OCI-LY7 (cell line): ENCODE measurements at regions of chr1 and their contacts with region 1.

Region 1: DNA sequence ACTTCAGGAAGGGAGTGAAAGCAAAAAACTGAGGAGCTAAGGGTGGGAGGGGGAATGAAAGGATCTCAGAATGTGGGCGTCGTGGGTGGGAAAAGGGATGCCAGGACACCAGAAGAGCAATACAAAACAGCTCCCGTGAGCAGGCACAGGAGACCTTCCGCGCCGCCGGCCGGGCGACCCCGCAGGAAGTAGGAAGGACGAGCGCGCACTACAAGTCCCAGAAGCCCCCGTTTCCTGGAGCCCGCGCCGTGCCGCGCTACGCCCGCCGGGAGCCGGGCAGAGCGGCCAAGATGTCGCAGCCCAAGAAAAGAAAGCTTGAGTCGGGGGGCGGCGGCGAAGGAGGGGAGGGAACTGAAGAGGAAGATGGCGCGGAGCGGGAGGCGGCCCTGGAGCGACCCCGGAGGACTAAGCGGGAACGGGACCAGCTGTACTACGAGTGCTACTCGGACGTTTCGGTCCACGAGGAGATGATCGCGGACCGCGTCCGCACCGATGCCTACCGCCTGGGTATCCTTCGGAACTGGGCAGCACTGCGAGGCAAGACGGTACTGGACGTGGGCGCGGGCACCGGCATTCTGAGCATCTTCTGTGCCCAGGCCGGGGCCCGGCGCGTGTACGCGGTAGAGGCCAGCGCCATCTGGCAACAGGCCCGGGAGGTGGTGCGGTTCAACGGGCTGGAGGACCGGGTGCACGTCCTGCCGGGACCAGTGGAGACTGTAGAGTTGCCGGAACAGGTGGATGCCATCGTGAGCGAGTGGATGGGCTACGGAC is at the start of gene PRMT6:
- DNase-seq: peak; percentile 89
- H3K4me3 ChIP-seq: peak within 1 kb of the TSS; percentile 83
- H3K27ac ChIP-seq: peak within 1 kb of the TSS; percentile 54
- H3K4me1 ChIP-seq: peaks cover 21% of the 10 kb centered on the region
- CTCF ChIP-seq: peak; percentile 37; the same call in 1 of the 2 replicates
- total RNA-seq, gene PRMT6: 41.7 and 42.5 TPM in 2 replicates

Region 2: DNA sequence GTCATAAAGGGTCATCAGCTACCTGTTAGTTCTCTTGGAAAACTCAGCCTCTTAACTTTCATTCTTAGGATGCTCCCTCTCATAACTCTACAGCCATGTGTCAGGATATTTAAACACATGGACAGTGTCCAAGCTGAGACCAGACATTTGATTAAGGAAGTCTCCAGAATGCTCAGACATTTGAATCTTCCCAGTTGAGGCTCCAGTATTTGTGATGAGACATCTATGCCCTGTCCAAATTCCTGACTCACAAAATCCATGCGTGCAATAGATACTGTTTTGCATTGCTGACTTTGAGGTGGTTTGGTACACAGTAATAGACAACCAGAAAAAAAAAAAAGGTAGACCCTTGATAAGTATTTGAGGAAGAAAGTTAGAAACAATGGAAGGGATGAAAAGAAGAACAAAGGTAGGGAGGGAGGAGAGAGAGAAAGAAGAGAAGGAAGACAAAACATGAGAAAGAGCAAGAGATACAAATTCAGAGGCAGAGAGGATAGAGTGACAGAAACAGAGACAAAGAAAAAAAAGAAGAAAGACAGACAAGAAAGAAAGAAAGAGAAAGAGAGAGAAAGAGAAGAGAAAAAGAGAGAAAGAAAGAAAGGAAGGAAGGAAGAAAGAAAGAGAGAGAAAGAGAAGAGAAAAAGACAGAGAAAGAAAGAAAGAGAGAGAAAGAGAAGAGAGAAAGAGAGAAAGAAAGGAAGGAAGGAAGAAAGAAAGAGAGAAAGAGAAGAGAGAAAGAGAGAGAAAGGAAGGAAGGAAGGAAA is 275.6 kb before region 1 on chr1:
- CTCF ChIA-PET with region 1: no interaction called
- POLR2A ChIA-PET with region 1: no interaction called
- intact Hi-C with region 1: no loop called
- DNase-seq: no peak
- H3K4me3 ChIP-seq: no peak overlapping the region
- H3K27ac ChIP-seq: no peak overlapping the region
- H3K4me1 ChIP-seq: no peaks in the 10 kb centered on the region
- CTCF ChIP-seq: no peak

Region 3: DNA sequence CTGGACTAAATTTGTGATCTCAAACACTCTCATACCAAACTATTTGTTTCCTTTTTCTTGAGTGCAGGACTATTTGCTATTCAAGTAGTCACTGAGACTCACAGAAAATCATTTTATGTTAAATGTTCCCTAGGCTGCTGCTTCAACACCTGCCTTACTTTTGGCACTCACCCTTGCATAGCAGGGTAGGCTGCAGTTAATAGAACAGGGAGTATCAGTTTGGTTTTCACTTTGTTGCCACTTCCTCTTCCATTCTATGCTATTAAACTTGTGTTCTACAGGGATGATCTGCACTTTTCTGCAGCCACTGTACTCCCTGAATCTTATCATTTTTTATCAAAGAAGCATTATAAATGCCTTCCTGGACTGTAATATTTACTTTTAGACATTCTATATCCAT is 148.8 kb before region 1 on chr1:
- CTCF ChIA-PET with region 1: no interaction called
- POLR2A ChIA-PET with region 1: interaction called, 6 read pairs
- intact Hi-C with region 1: loop called (anchors 5 kb)
- DNase-seq: peak; percentile 88
- H3K4me3 ChIP-seq: peak overlapping the region; percentile 46
- H3K27ac ChIP-seq: peak overlapping the region; percentile 95
- H3K4me1 ChIP-seq: peaks cover 28% of the 10 kb centered on the region
- CTCF ChIP-seq: no peak

Region 4: DNA sequence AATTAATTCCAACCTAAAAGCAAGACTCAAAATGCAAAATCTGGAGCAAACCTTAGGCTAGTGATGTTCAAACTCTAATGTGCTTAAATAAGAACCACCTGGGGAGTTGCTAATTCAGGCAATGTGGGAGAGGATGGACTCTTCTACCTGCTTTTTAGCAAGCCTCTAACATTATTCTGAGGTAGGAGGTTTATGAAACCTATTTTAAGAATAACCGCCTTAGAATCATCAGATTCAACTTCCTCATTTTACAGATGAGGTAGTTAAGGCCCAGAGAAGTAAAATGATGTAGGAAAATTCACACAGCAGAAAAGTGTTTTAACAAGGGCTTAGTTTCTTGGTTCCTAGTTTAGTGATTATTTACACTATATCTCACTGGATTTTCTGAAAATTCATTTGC is 75.6 kb after region 1 on chr1:
- CTCF ChIA-PET with region 1: no interaction called
- POLR2A ChIA-PET with region 1: interaction called, 19 read pairs
- intact Hi-C with region 1: loop called (anchors 2 kb)
- DNase-seq: peak; percentile 84
- H3K4me3 ChIP-seq: peak overlapping the region; percentile 26
- H3K27ac ChIP-seq: peak overlapping the region; percentile 92
- H3K4me1 ChIP-seq: peaks cover 43% of the 10 kb centered on the region
- CTCF ChIP-seq: no peak